Endothelial cell of umbilical vein (primary cell): ENCODE measurements at regions of chr2 and their contacts with region 1.

Region 1: GRCh38 chr2:206693399-206694137 is 24.6 kb downstream of the DYTN start:
- DNase-seq: peak; percentile 71
- H3K4me3 ChIP-seq: no peak overlapping the region
- H3K27ac ChIP-seq: no peak overlapping the region
- H3K4me1 ChIP-seq: no peaks in the 10 kb centered on the region
- H3K27me3 ChIP-seq: no peaks in the 10 kb centered on the region
- CTCF ChIP-seq: peak; percentile 35 to 40
- POLR2A ChIP-seq: no peak

Region 2: GRCh38 chr2:206765242-206766056 is 71.9 kb after region 1 on chr2 and contains the starts of genes FASTKD2 and MDH1B:
- CTCF ChIA-PET with region 1: no interaction called
- POLR2A ChIA-PET with region 1: no interaction called
- dilution Hi-C with region 1: no loop called
- intact Hi-C with region 1: loop called (anchors 5 kb)
- DNase-seq: peak; percentile 99
- H3K4me3 ChIP-seq: peak within 1 kb of the TSS; percentile 76 to 96 (median 80)
- H3K27ac ChIP-seq: peak within 1 kb of the TSS; percentile 89
- H3K4me1 ChIP-seq: peaks cover 8% of the 10 kb centered on the region
- H3K27me3 ChIP-seq: peaks cover 5 to 20% of the 10 kb centered on the region in 2 experiments
- CTCF ChIP-seq: no peak
- POLR2A ChIP-seq: peak; percentile 90
- total RNA-seq, gene FASTKD2: 22.6 and 24.1 TPM in 2 replicates
- total RNA-seq, gene MDH1B: 0.51 TPM in 1 of 2 replicates, not detected in the other

Region 3: DNA sequence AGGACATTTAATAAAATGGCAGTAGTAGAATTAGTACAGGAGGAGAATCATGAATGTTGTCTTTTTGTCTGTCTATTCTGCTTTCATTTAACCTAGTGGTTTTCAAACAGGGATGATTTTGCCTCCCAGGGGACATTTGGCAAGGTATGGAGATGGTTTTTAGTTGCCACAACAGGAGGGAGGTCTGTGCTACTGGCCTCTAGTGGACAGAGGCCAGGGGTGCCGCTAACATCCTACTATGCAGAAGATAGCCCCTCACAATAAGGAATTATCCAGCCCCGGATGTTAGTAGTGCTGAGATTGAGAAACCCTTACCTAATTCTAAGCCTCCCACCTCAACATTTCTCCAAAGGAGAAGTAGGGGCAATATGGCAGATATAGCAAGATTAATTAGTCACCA is 90.2 kb after region 1 on chr2:
- CTCF ChIA-PET with region 1: interaction called, 33 read pairs
- POLR2A ChIA-PET with region 1: no interaction called
- dilution Hi-C with region 1: no loop called
- intact Hi-C with region 1: loop called (anchors 1 kb)
- DNase-seq: no peak
- H3K4me3 ChIP-seq: no peak overlapping the region
- H3K27ac ChIP-seq: no peak overlapping the region
- H3K4me1 ChIP-seq: peaks cover 3% of the 10 kb centered on the region
- H3K27me3 ChIP-seq: no peaks in the 10 kb centered on the region
- CTCF ChIP-seq: peak; percentile 40 to 71
- POLR2A ChIP-seq: no peak

Region 4: GRCh38 chr2:206832873-206833272 is 139.3 kb after region 1 on chr2:
- CTCF ChIA-PET with region 1: no interaction called
- POLR2A ChIA-PET with region 1: no interaction called
- dilution Hi-C with region 1: no loop called
- intact Hi-C with region 1: no loop called
- DNase-seq: no peak
- H3K4me3 ChIP-seq: no peak overlapping the region
- H3K27ac ChIP-seq: no peak overlapping the region
- H3K4me1 ChIP-seq: no peaks in the 10 kb centered on the region
- H3K27me3 ChIP-seq: no peaks in the 10 kb centered on the region
- CTCF ChIP-seq: no peak
- POLR2A ChIP-seq: no peak

Region 5: DNA sequence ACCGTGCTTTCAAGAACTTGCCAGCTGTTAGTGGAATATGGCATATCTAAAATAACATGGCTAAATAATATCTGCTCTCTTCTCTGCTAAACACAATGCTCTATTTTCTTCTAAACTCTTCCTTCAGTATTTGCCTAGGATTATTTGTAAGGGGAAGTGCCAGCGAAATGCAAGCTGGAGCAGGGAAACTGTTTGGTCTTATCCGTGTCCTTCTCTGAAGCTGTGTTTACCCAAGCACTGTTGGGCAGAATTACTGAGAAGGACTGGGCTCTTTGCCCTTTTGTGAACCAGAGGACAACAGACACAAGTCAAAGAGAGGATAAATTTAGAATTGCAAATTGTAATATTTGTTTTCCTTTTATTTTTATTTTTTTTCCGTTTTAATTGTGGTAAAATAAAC is 269.4 kb after region 1 on chr2:
- CTCF ChIA-PET with region 1: no interaction called
- POLR2A ChIA-PET with region 1: no interaction called
- dilution Hi-C with region 1: no loop called
- intact Hi-C with region 1: loop called (anchors 5 kb)
- DNase-seq: no peak
- H3K4me3 ChIP-seq: no peak overlapping the region
- H3K27ac ChIP-seq: no peak overlapping the region
- H3K4me1 ChIP-seq: no peaks in the 10 kb centered on the region
- H3K27me3 ChIP-seq: no peaks in the 10 kb centered on the region
- CTCF ChIP-seq: no peak
- POLR2A ChIP-seq: no peak

Region 6: GRCh38 chr2:206981739-206982340 is 288.3 kb after region 1 on chr2:
- CTCF ChIA-PET with region 1: no interaction called
- POLR2A ChIA-PET with region 1: no interaction called
- dilution Hi-C with region 1: no loop called
- intact Hi-C with region 1: loop called (anchors 1 kb)
- DNase-seq: peak; percentile 79
- H3K4me3 ChIP-seq: no peak overlapping the region
- H3K27ac ChIP-seq: no peak overlapping the region
- H3K4me1 ChIP-seq: no peaks in the 10 kb centered on the region
- H3K27me3 ChIP-seq: peaks cover 0 to 5% of the 10 kb centered on the region in 2 experiments
- CTCF ChIP-seq: peak; percentile 83 to 88
- POLR2A ChIP-seq: no peak

Region 7: DNA sequence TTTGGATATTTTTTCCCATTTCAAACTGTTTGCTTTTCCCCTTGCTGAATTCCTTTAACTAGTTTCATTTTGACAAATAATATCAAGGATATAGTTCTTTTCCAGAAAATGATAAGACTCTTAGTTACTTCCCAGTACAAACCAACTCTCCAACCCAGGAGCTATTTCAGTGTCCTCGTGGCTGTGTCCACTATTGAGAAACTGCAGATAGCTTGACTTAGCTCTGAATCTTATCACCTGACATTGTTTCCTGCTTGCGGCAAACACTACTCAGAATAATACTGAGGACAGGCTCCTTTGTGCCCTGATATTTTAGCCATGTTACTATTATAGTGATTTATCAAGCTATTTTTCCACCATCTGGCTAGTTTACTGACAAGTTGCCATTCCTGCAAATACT is 397.6 kb after region 1 on chr2:
- CTCF ChIA-PET with region 1: no interaction called
- POLR2A ChIA-PET with region 1: no interaction called
- dilution Hi-C with region 1: no loop called
- intact Hi-C with region 1: loop called (anchors 10 kb)
- DNase-seq: peak; percentile 33
- H3K4me3 ChIP-seq: no peak overlapping the region
- H3K27ac ChIP-seq: no peak overlapping the region
- H3K4me1 ChIP-seq: peaks cover 17% of the 10 kb centered on the region
- H3K27me3 ChIP-seq: no peaks in the 10 kb centered on the region
- CTCF ChIP-seq: no peak
- POLR2A ChIP-seq: no peak

Region 8: GRCh38 chr2:208072250-208072892 is 1378.8 kb after region 1 on chr2:
- CTCF ChIA-PET with region 1: interaction called, 3 read pairs
- POLR2A ChIA-PET with region 1: no interaction called
- dilution Hi-C with region 1: no loop called
- intact Hi-C with region 1: loop called (anchors 1 kb)
- DNase-seq: peak; percentile 77
- H3K4me3 ChIP-seq: no peak overlapping the region
- H3K27ac ChIP-seq: no peak overlapping the region
- H3K4me1 ChIP-seq: no peaks in the 10 kb centered on the region
- H3K27me3 ChIP-seq: peaks cover 3 to 8% of the 10 kb centered on the region in 2 experiments
- CTCF ChIP-seq: peak; percentile 80 to 84
- POLR2A ChIP-seq: no peak